Adrenal gland (tissue), 19 donors: ENCODE measurements at regions of chr4 and their contacts with region 1.

Region 1: GRCh38 chr4:18689308-18690115 is 668.0 kb upstream of the LCORL start:
- DNase-seq: peak; percentile 35 to 78 (median 56)
- H3K4me3 ChIP-seq: no peak overlapping the region
- H3K27ac ChIP-seq: no peak overlapping the region
- H3K4me1 ChIP-seq: no peaks in the 10 kb centered on the region
- H3K27me3 ChIP-seq: no peaks in the 10 kb centered on the region
- CTCF ChIP-seq: peak; percentile 68 to 86 (median 74)
- POLR2A ChIP-seq: no peak

Region 2: GRCh38 chr4:17066972-17067371 is 1622.5 kb before region 1 on chr4:
- intact Hi-C with region 1: no loop called
- DNase-seq: peak; percentile 19 to 55 (median 49)
- H3K4me3 ChIP-seq: no peak overlapping the region
- H3K27ac ChIP-seq: peak overlapping the region in 1 of 5 donors; percentile 33
- H3K4me1 ChIP-seq: no peaks in the 10 kb centered on the region
- H3K27me3 ChIP-seq: no peaks in the 10 kb centered on the region
- CTCF ChIP-seq: no peak
- POLR2A ChIP-seq: no peak

Region 3: DNA sequence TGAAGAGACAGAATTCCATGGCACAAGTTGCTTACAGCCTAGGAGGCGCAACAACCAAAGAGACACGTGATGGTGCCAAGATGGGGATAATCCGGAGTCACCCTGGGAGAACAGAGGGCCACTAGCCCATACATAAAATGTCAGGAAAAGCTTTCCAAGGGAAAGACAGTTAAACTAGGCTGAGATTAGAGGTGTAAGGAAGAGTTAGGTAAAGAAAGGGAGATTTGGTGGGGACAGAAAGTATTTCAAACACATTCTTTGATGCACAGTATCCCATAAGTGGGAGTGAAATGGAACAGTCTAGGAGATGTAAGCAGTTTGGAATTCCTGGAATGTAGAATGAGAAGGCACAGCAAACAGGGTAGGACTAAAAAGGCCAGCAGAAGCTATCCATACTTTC is 193.0 kb after region 1 on chr4:
- intact Hi-C with region 1: no loop called
- DNase-seq: no peak
- H3K4me3 ChIP-seq: no peak overlapping the region
- H3K27ac ChIP-seq: no peak overlapping the region
- H3K4me1 ChIP-seq: no peaks in the 10 kb centered on the region
- H3K27me3 ChIP-seq: no peaks in the 10 kb centered on the region
- CTCF ChIP-seq: no peak
- POLR2A ChIP-seq: no peak

Region 4: GRCh38 chr4:18934197-18934596 is 244.7 kb after region 1 on chr4:
- intact Hi-C with region 1: loop called in 1 of 2 experiments (anchors 10 kb)
- DNase-seq: no peak
- H3K4me3 ChIP-seq: no peak overlapping the region
- H3K27ac ChIP-seq: no peak overlapping the region
- H3K4me1 ChIP-seq: no peaks in the 10 kb centered on the region
- H3K27me3 ChIP-seq: no peaks in the 10 kb centered on the region
- CTCF ChIP-seq: peak in 2 of 6 experiments; percentile 8 to 45
- POLR2A ChIP-seq: no peak

Region 5: GRCh38 chr4:18999595-18999994 is 310.1 kb after region 1 on chr4:
- intact Hi-C with region 1: no loop called
- DNase-seq: no peak
- H3K4me3 ChIP-seq: no peak overlapping the region
- H3K27ac ChIP-seq: no peak overlapping the region
- H3K4me1 ChIP-seq: no peaks in the 10 kb centered on the region
- H3K27me3 ChIP-seq: no peaks in the 10 kb centered on the region
- CTCF ChIP-seq: no peak
- POLR2A ChIP-seq: no peak